ENCODE measurements at regions of chr2 and their contacts with region 1.

Region 1: GRCh38 chr2:17199741-17200140 is 318.5 kb downstream of the RAD51AP2 start:
- DNase-seq: no peak
- H3K4me3 ChIP-seq: no peak overlapping the region
- H3K27ac ChIP-seq: no peak overlapping the region
- H3K4me1 ChIP-seq: peaks cover 11% of the 10 kb centered on the region
- CTCF ChIP-seq: no peak

Region 2: GRCh38 chr2:17058772-17059402 is 140.9 kb before region 1 on chr2:
- CTCF ChIA-PET with region 1: no interaction called
- POLR2A ChIA-PET with region 1: no interaction called
- intact Hi-C with region 1: loop called (anchors 5 kb)
- DNase-seq: no peak
- H3K4me3 ChIP-seq: no peak overlapping the region
- H3K27ac ChIP-seq: no peak overlapping the region
- H3K4me1 ChIP-seq: no peaks in the 10 kb centered on the region
- CTCF ChIP-seq: no peak

Region 3: DNA sequence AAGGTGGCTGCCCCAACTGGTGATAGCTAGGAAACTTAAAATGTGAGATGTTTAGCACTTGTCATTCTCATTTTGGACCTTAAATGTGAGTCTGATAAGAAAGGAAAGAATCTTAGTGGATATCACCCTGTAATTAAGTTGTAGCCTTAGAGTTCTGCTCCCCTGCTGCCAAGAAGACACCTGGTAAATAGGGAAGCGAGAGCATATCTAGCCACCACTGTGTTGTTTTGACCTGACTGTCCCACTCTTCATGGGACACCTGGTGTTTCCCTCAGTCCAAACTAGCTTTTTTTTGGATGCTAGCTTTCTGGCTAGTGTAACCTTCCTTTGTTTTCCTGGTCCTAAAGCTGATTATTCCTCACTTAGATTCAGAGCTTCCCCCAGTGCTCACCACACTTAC is 39.1 kb before region 1 on chr2:
- CTCF ChIA-PET with region 1: no interaction called
- POLR2A ChIA-PET with region 1: interaction called, 4 read pairs
- intact Hi-C with region 1: loop called (anchors 5 kb)
- DNase-seq: peak; percentile 47
- H3K4me3 ChIP-seq: no peak overlapping the region
- H3K27ac ChIP-seq: peak overlapping the region; percentile 17
- H3K4me1 ChIP-seq: peaks cover 16% of the 10 kb centered on the region
- CTCF ChIP-seq: no peak

Measured in OCI-LY7 (cell line).